Right ventricle myocardium inferior (tissue), 1 donor: ENCODE measurements at regions of chr11 and their contacts with region 1.

Region 1: GRCh38 chr11:30545507-30545906 is 40.6 kb downstream of the MPPED2 start:
- DNase-seq: no peak
- ATAC-seq: no peak

Region 2: GRCh38 chr11:30244265-30244664 is 301.2 kb before region 1 on chr11:
- intact Hi-C with region 1: no loop called
- DNase-seq: no peak
- ATAC-seq: no peak

Region 3: GRCh38 chr11:30440510-30440909 is 105.0 kb before region 1 on chr11:
- intact Hi-C with region 1: no loop called
- DNase-seq: no peak
- ATAC-seq: peak; percentile 67

Region 4: GRCh38 chr11:30454132-30454531 is 91.4 kb before region 1 on chr11:
- intact Hi-C with region 1: loop called (anchors 10 kb)
- DNase-seq: no peak
- ATAC-seq: no peak

Region 5: GRCh38 chr11:30758012-30758411 is 212.5 kb after region 1 on chr11:
- intact Hi-C with region 1: no loop called
- DNase-seq: no peak
- ATAC-seq: no peak